Heart right ventricle (tissue), 16 donors: ENCODE measurements at regions of chr1 and their contacts with region 1.

Region 1: DNA sequence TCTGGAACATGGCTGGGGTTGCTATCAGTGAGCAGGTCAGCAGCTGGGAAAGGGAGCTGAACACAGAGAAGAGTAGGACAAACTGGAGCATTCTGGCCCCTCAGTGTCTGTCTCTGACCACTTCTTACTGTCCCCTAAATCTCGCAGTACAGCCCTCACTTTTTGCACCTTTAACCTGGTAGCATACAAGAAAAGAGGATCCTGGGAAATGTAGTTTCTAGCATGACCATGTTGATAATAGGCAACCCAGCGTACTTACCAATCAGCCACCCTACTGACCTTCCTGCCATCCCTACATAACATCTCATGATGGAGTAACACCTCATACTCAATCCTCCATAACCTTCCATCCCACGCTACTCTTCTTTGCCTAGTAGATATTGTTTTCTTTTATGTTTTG is 99.1 kb upstream of the RAVER2 start:
- DNase-seq: no peak
- ATAC-seq: no peak
- H3K4me3 ChIP-seq: no peak overlapping the region
- H3K27ac ChIP-seq: no peak overlapping the region
- H3K4me1 ChIP-seq: peaks cover 0 to 4% (median 0%) of the 10 kb centered on the region in 9 donors
- H3K27me3 ChIP-seq: no peaks in the 10 kb centered on the region
- CTCF ChIP-seq: no peak

Region 2: DNA sequence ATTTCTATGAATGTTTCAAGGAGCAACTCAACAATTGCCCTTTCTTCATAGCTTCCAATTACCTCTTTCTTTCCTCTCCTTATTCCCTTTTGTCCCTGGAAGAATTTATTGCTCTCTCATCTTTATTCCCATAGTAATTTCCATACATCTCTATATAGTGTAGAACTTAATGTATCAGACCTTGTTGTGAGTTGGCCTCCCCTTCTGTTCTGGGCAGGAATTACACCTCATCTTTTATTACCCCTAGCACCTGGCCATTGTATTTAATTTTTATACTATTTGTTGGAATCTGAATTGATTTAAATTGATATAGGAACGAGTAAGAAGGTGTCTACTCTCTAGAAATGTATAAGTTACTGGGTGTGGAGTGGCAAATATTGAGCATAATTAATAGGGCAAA is 61.3 kb before region 1 on chr1:
- intact Hi-C with region 1: loop called in 1 of 10 experiments (anchors 10 kb)
- DNase-seq: no peak
- ATAC-seq: no peak
- H3K4me3 ChIP-seq: no peak overlapping the region
- H3K27ac ChIP-seq: no peak overlapping the region
- H3K4me1 ChIP-seq: peaks cover 0 to 12% (median 0%) of the 10 kb centered on the region in 9 donors
- H3K27me3 ChIP-seq: no peaks in the 10 kb centered on the region
- CTCF ChIP-seq: peak in 1 of 9 donors; percentile 30